AG04449 (cell line): ENCODE measurements at regions of chr1 and their contacts with region 1.

Region 1: GRCh38 chr1:152440635-152441471 is 26.8 kb upstream of the CRNN start:
- DNase-seq: no peak
- H3K4me3 ChIP-seq: no peak overlapping the region
- CTCF ChIP-seq: peak; percentile 82

Region 2: GRCh38 chr1:152398812-152399698 is 41.8 kb before region 1 on chr1:
- CTCF ChIA-PET with region 1: interaction called, 14 read pairs
- POLR2A ChIA-PET with region 1: no interaction called
- DNase-seq: no peak
- H3K4me3 ChIP-seq: no peak overlapping the region
- CTCF ChIP-seq: no peak

Region 3: DNA sequence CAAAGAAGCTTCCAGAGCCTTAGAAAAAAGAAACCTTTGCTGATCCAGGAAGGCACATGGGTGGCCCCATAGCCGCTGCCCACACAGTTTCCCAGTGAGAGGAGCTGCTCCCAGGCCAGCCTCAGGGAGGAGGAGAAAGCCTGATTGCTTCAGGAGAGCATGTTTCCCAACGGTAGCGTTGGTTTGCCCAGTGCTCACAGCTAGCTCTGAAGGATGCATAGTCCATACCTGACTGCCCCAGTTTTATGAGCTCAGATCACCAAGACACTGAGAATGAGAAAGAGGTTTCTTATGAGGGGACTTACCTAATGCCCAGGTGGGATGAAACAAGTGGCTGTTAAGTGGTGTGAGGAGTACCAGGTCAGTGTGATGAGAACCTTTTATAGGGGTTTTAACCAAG is 26.9 kb before region 1 on chr1 and contains the start of gene CRNN:
- CTCF ChIA-PET with region 1: no interaction called
- POLR2A ChIA-PET with region 1: no interaction called
- DNase-seq: no peak
- H3K4me3 ChIP-seq: no peak within 1 kb of the TSS
- CTCF ChIP-seq: no peak

Region 4: GRCh38 chr1:152451254-152451653 is 10.4 kb after region 1 on chr1:
- CTCF ChIA-PET with region 1: interaction called, 11 read pairs
- POLR2A ChIA-PET with region 1: no interaction called
- DNase-seq: no peak
- H3K4me3 ChIP-seq: no peak overlapping the region
- CTCF ChIP-seq: no peak

Region 5: DNA sequence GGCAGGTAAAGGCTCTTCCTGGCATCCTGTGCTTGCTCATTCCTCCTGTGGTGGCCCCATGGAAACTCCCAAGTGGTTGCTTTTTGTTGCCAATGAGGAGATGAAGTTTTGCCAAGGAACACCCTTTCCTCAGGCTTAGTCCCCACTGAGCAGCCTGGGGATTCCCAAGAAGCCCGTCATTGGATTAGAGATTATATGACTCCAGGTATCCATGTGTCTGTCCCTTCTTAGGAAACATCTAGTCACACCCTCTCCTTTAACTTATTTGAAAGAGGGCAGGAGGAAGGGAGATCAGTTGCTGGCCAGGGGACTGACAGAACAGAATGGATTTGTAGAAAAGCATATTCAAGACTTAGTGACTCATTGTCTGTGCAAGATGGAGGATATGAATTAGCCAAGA is 185.9 kb after region 1 on chr1:
- CTCF ChIA-PET with region 1: no interaction called
- POLR2A ChIA-PET with region 1: no interaction called
- DNase-seq: no peak
- H3K4me3 ChIP-seq: no peak overlapping the region
- CTCF ChIP-seq: no peak